Panc1 (cell line): ENCODE measurements at regions of chr3 and their contacts with region 1.

Region 1: GRCh38 chr3:190424478-190425439 is 24.9 kb downstream of the TMEM207 start:
- DNase-seq: peak; percentile 93
- ATAC-seq: peak; percentile 96
- H3K4me3 ChIP-seq: peak overlapping the region; percentile 21 to 22
- H3K27ac ChIP-seq: no peak overlapping the region
- H3K4me1 ChIP-seq: peaks cover 4% of the 10 kb centered on the region; the same call in 1 of the 2 replicates
- H3K27me3 ChIP-seq: no peaks in the 10 kb centered on the region
- CTCF ChIP-seq: peak; percentile 82

Region 2: GRCh38 chr3:190321789-190322603 is 102.8 kb before region 1 on chr3 and contains the start of gene CLDN1:
- CTCF ChIA-PET with region 1: interaction called, 3 read pairs
- POLR2A ChIA-PET with region 1: no interaction called
- in situ Hi-C with region 1: no loop called
- intact Hi-C with region 1: loop called (anchors 5 kb)
- DNase-seq: no peak
- ATAC-seq: peak; percentile 96
- H3K4me3 ChIP-seq: peak within 1 kb of the TSS; percentile 66 to 67
- H3K27ac ChIP-seq: peak within 1 kb of the TSS; percentile 79
- H3K4me1 ChIP-seq: peaks cover 17% of the 10 kb centered on the region; the same call in 1 of the 2 replicates
- H3K27me3 ChIP-seq: 0 out of 2 replicates have a peak, but pooled peaks cover 2% of the 10 kb centered on the region
- CTCF ChIP-seq: peak; percentile 100
- total RNA-seq, gene CLDN1: 30.9 TPM

Region 3: DNA sequence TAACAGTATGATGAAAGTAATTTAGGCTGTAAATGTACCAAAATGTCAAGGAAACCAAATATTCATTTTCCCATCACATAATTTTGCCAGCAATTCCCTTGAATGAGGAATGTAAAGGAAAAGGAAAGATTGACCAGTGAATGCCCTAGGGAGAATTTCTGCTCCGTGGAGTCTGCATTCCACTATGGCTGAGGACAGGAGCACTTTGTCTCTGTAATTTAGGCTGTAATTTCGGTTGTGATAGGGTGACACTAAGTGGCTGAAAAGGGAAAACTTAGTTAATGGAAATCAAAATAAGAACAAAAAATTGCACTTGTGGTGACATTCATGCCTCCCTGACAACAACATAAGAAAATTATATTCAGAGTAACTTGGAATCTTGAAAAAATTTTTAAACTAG is 33.3 kb after region 1 on chr3:
- CTCF ChIA-PET with region 1: no interaction called
- POLR2A ChIA-PET with region 1: no interaction called
- in situ Hi-C with region 1: no loop called
- intact Hi-C with region 1: no loop called
- DNase-seq: no peak
- ATAC-seq: 0 out of 2 replicates have a peak, but pooled peaks have one; percentile 66
- H3K4me3 ChIP-seq: no peak overlapping the region
- H3K27ac ChIP-seq: no peak overlapping the region
- H3K4me1 ChIP-seq: no peaks in the 10 kb centered on the region
- H3K27me3 ChIP-seq: no peaks in the 10 kb centered on the region
- CTCF ChIP-seq: peak; percentile 11; the same call in 1 of the 2 replicates